ENCODE measurements at regions of chr15 and their contacts with region 1.

Region 1: DNA sequence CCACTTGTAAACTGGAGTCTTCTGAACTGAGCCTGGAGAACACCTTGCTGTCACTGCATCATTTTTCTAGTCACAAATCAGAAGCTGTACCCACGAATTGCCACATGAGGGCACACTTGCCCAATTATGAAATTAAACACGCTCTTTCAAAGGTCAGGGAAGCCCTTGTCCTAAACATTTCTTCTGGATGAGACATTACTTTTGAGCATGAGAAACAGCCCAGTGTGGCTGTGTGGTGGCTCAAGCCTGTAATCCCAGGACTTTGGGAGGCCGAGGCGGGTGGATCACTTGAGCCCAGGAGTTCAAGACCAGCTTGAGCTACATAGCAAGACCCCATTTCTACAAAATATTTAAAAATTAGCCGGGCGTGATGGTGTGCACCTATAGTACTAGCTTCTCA is 27.5 kb upstream of the CFAP161 start:
- DNase-seq: peak; percentile 91
- H3K4me3 ChIP-seq: no peak overlapping the region
- H3K27ac ChIP-seq: no peak overlapping the region
- H3K4me1 ChIP-seq: peaks cover 0 to 17% (median 2%) of the 10 kb centered on the region in 4 donors
- H3K27me3 ChIP-seq: peaks cover 0 to 12% (median 0%) of the 10 kb centered on the region in 4 donors
- CTCF ChIP-seq: peak; percentile 65 to 78 (median 75)
- EP300 ChIP-seq: no peak
- POLR2A ChIP-seq: no peak

Region 2: DNA sequence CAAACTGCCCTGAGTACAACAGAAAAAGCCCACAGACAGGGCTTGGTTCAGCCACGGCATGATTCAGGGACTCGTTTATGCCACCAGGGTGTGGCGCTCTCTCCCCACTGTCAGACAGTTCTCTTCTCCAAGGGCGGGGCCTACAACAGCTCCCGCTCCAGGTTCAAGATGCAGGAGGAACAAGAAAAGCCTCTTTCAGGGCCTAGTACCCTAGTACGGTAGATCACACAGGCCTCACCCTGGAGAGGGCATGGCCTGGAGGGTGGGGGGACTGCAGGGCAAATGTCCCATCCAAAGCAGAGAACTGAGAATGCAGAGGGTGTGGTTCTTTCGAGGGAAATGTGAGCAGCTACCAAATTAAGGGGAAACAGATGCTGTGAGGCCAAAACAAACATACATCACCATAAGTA is 128.9 kb before region 1 on chr15:
- intact Hi-C with region 1: loop called (anchors 5 kb)
- DNase-seq: no peak
- H3K4me3 ChIP-seq: no peak overlapping the region
- H3K27ac ChIP-seq: no peak overlapping the region
- H3K4me1 ChIP-seq: peaks cover 5 to 19% (median 12%) of the 10 kb centered on the region in 4 donors
- H3K27me3 ChIP-seq: no peaks in the 10 kb centered on the region
- CTCF ChIP-seq: peak; percentile 46 to 53 (median 51)
- EP300 ChIP-seq: no peak
- POLR2A ChIP-seq: no peak